OCI-LY7 (cell line): ENCODE measurements at regions of chr14 and their contacts with region 1.

Region 1: GRCh38 chr14:73458151-73458976 is at the start of gene NUMB:
- DNase-seq: peak; percentile 100
- H3K4me3 ChIP-seq: peak within 1 kb of the TSS; percentile 88
- H3K27ac ChIP-seq: peak within 1 kb of the TSS; percentile 53
- H3K4me1 ChIP-seq: peaks cover 73% of the 10 kb centered on the region
- CTCF ChIP-seq: 0 out of 2 replicates have a peak, but pooled peaks have one; percentile 16
- total RNA-seq, gene NUMB: 17.1 and 18.6 TPM in 2 replicates

Region 2: DNA sequence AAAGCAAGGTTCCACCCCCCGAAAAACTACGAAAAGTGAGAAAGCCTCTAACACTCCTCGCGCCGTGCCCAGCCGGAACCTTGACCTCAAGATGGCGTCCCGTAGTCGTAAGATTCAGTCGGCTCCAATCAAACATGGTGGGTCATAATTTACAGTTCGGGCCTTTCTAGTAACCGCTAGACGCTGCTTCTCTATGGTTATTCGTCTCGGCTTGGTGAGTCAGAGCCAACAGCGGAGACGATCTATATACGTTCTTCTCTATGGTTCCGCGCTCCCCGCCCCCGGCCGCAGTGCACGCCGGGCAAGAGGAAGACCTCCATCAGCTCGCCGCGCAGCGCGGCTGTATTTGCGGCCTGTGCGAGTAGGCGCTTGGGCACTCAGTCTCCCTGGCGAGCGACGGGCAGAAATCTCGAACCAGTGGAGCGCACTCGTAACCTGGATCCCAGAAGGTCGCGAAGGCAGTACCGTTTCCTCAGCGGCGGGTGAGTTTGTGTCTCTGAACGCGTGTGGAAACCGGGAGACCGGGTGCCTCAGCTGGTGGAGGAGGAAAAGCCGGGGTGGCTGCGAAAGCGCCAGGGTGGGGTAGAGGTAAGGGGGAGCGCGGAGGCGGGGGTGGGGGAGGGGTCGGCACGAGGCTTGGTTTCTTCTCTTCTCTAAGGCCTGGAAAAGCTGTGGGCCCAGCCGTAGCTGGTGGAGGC is 400.0 kb before region 1 on chr14 and contains the start of gene RBM25:
- CTCF ChIA-PET with region 1: no interaction called
- POLR2A ChIA-PET with region 1: interaction called, 6 read pairs
- intact Hi-C with region 1: loop called (anchors 5 kb)
- DNase-seq: peak; percentile 99
- H3K4me3 ChIP-seq: peak within 1 kb of the TSS; percentile 83
- H3K27ac ChIP-seq: peak within 1 kb of the TSS; percentile 77
- H3K4me1 ChIP-seq: peaks cover 41% of the 10 kb centered on the region
- CTCF ChIP-seq: no peak; the same call in 1 of the 2 replicates
- total RNA-seq, gene RBM25: 60.1 and 70.5 TPM in 2 replicates

Region 3: GRCh38 chr14:73418227-73418626 is 40.1 kb before region 1 on chr14:
- CTCF ChIA-PET with region 1: interaction called, 3 read pairs
- POLR2A ChIA-PET with region 1: interaction called, 4 read pairs
- intact Hi-C with region 1: loop called (anchors 2 kb)
- DNase-seq: no peak
- H3K4me3 ChIP-seq: no peak overlapping the region
- H3K27ac ChIP-seq: no peak overlapping the region
- H3K4me1 ChIP-seq: peaks cover 39% of the 10 kb centered on the region
- CTCF ChIP-seq: no peak

Region 4: DNA sequence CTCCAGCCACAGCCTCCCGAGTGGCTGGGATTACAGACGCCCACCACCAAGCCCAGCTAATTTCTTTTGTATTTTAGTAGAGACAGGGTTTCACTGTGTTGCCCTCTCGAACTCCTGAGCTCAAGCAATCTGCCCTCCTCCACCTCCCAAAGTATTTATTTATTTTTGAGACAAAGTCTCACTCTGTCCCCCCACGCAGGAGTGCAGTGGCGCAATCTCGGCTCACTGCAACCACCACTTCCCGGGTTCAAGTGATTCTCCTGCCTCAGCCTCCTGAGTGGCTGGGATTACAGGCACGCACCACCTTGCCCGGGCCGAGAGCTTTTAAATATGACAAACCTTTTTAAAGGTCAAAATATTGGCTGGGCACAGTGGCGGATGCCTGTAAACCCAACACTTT is 14.6 kb before region 1 on chr14:
- CTCF ChIA-PET with region 1: interaction called, 3 read pairs
- POLR2A ChIA-PET with region 1: interaction called, 40 read pairs
- intact Hi-C with region 1: no loop called
- DNase-seq: no peak
- H3K4me3 ChIP-seq: no peak overlapping the region
- H3K27ac ChIP-seq: no peak overlapping the region
- H3K4me1 ChIP-seq: peaks cover 9% of the 10 kb centered on the region
- CTCF ChIP-seq: no peak